Posterior vena cava (tissue), 2 donors: ENCODE measurements at regions of chr7 and their contacts with region 1.

Region 1: DNA sequence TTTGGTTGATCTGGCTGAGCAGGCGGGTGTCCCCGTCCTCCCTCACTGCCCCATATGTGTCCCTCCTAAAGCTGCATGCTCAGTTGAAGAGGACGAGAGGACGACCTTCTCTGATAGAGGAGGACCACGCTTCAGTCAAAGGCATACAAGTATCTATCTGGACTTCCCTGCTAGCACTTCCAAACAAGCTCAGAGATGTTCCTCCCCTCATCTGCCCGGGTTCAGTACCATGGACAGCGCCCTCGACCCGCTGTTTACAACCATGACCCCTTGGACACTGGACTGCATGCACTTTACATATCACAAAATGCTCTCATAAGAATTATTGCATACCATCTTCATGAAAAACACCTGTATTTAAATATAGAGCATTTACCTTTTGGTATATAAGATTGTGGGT is 26.9 kb upstream of the TRIM56 start:
- DNase-seq: peak; percentile 88

Region 2: DNA sequence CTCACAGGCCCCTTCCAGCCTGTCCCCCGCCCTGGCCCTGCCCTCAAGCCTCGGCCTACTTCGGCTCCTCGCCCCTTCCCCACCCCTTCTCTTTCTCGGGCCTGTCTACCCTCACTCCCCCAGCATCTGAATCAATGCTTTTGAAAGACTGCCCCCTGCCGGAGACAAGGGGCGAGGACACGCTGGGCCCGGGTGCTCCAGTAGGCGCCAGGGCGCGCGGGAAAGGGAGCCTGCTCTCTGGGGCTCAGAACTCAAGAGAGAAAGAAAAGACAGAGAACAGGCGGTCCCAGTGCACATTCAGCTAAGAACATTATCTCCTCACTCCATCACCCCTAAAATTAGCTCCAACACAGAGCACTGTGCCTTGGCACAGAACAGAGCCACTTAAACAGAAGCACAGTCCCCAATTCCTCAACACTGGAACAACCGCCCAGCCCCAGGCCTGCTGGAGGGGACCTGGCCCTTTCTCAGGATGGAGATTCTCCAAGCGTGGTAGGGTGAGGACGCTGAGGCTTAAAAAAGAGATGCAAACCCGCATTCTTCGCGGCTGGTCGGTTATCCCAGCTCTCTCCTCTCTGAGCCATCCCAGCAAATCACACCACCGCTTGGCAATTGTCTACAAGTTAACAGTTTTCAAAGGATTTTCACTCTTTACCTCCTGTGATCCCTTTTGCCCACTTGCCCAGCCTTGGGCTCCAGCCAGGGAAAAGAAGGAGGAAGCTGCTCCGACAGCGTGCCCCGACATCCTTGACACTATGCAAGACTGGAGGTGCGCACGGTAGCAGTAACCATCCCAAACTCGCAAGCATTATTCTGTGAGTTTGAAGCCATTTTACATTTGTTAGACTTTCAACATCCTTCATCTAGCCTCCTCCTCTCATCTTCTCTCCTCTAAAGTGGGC is 366.4 kb before region 1 on chr7:
- intact Hi-C with region 1: no loop called
- DNase-seq: peak; percentile 94

Region 3: GRCh38 chr7:100889761-100890634 is 168.4 kb before region 1 on chr7:
- intact Hi-C with region 1: loop called in 1 of 2 experiments (anchors 5 kb)
- DNase-seq: peak; percentile 98

Region 4: GRCh38 chr7:100965723-100966541 is 92.4 kb before region 1 on chr7:
- intact Hi-C with region 1: loop called (anchors 5 to 10 kb)
- DNase-seq: peak; percentile 92